ENCODE measurements at regions of chr21 and their contacts with region 1.

Region 1: GRCh38 chr21:36976882-36977651 is 10.6 kb upstream of the HLCS start:
- DNase-seq: no peak
- H3K4me3 ChIP-seq: no peak overlapping the region
- CTCF ChIP-seq: peak; percentile 49

Region 2: GRCh38 chr21:36966066-36966820 is 10.8 kb before region 1 on chr21 and contains the start of gene HLCS:
- CTCF ChIA-PET with region 1: interaction called, 59 read pairs
- POLR2A ChIA-PET with region 1: no interaction called
- DNase-seq: no peak
- H3K4me3 ChIP-seq: peak within 1 kb of the TSS; percentile 75
- CTCF ChIP-seq: peak; percentile 14

Region 3: GRCh38 chr21:37009740-37010341 is 32.8 kb after region 1 on chr21:
- CTCF ChIA-PET with region 1: interaction called, 21 read pairs
- POLR2A ChIA-PET with region 1: interaction called, 4 read pairs
- DNase-seq: no peak
- H3K4me3 ChIP-seq: peak overlapping the region; percentile 29
- CTCF ChIP-seq: peak; percentile 95

Region 4: DNA sequence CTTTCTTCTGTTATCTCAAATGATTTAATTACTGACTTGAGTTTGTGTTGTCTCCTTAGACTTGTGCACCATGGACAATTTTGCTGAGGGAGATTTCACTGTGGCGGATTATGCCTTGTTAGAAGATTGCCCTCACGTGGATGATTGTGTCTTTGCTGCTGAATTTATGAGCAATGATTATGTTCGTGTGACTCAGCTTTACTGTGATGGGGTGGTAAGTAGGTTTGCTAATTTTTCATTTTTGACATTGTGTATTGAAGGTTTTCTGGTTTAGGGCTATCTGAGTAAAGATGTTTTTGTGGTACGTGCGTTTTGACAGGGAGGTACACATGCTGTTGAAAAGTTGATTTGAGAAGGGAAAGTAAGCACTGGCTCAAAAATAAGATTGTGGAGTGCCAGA is 110.1 kb after region 1 on chr21:
- CTCF ChIA-PET with region 1: interaction called, 36 read pairs
- POLR2A ChIA-PET with region 1: no interaction called
- DNase-seq: no peak
- H3K4me3 ChIP-seq: no peak overlapping the region
- CTCF ChIP-seq: peak; percentile 36

Region 5: DNA sequence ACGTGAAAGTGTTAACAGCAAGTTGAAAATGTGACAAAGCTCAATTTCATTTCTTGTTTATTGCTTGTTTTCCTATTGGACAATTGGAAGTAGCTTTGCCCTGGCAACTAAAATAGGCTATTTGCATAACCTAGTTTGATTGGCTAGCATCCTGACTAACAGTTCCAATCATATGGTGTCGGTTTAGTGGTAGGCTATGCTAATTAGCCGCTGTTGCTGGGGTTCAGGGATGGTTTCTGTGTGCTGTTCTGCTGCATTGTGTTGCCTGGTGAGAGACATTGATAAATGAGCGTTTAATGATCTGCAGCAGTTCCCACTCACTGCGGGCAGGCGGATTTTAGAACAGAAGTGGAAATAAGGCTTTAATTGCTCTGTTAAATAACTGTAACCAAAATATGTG is 458.1 kb after region 1 on chr21:
- CTCF ChIA-PET with region 1: no interaction called
- POLR2A ChIA-PET with region 1: no interaction called
- DNase-seq: peak; percentile 61
- H3K4me3 ChIP-seq: no peak overlapping the region
- CTCF ChIP-seq: no peak

Measured in AG04449 (cell line).